Endothelial cell of umbilical vein (primary cell): ENCODE measurements at regions of chr1 and their contacts with region 1.

Region 1: GRCh38 chr1:231918239-231919015 is 291.8 kb downstream of the DISC1 start:
- DNase-seq: no peak
- H3K4me3 ChIP-seq: no peak overlapping the region
- H3K27ac ChIP-seq: peak overlapping the region; percentile 40
- H3K4me1 ChIP-seq: peaks cover 34% of the 10 kb centered on the region
- H3K27me3 ChIP-seq: no peaks in the 10 kb centered on the region
- CTCF ChIP-seq: no peak
- POLR2A ChIP-seq: no peak

Region 2: DNA sequence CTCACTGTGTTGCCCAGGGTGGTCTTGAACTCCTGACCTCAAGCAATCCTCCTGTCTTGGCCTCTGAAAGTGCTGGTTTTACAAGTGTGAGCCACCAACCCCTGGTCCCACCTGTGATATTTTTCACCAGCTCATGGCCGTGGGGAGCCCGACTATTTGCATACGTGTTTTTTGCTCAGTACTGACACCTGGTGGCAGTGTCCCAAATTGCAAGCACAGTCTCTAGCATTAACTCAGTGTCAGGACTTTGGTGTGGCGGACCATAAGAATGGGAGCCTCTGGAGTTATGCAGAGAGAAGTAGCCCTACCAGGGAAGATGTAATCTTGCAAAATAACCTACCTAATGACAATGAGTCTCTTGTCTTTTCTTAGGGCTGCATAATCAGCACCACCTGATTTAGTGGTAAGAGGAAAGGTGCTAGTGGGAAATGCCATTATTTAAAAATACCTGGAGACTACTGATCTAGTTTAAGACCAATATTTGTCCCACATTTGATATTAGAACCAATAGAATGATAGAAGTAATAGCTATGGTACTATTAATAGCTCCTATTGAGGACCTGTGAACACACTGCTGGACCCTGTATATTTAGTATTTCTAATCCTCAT is 13.5 kb after region 1 on chr1:
- CTCF ChIA-PET with region 1: interaction called, 6 read pairs
- POLR2A ChIA-PET with region 1: no interaction called
- dilution Hi-C with region 1: no loop called
- intact Hi-C with region 1: loop called (anchors 1 kb)
- DNase-seq: no peak
- H3K4me3 ChIP-seq: no peak overlapping the region
- H3K27ac ChIP-seq: no peak overlapping the region
- H3K4me1 ChIP-seq: peaks cover 20% of the 10 kb centered on the region
- H3K27me3 ChIP-seq: no peaks in the 10 kb centered on the region
- CTCF ChIP-seq: peak; percentile 42 to 53
- POLR2A ChIP-seq: no peak

Region 3: DNA sequence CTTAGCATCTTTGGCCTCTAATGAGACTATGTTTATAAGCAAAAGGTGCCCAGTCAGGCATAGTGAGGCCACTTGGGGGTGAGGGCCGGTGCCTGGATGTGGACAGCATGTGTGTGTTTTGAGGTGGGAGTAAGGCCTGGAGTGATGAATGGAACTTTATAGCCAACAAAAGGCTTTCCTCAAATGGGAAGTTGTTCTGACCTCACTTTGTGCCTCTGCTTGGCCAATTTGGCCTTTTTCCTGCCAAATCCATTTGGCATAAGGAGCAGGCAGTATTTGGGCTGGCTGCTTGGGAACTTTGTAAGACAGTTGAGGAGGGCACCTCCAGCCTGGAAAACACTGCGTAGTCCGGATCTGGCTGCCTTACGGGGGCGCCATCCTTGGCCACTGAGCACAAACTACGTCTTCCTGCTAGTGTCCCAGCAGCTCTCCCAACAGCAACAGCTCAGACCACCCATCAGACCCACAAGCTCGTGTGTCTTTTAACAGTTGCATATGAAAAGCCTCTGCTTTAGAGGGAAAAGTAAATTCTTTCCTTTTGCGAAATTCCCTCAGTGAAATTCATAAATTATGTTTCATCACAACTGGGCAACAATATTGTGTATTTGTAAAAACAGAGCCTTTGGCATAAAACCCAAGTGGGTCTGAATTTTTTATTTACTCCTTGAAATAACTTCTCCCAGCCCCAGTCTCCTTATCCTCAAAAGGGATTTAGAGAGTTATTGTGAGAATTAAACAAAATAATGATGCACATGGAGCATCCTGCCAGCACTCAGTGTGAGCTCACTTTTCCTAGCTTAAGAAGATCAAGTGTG is 31.1 kb after region 1 on chr1:
- CTCF ChIA-PET with region 1: no interaction called
- POLR2A ChIA-PET with region 1: no interaction called
- dilution Hi-C with region 1: no loop called
- intact Hi-C with region 1: loop called (anchors 1 kb)
- DNase-seq: no peak
- H3K4me3 ChIP-seq: no peak overlapping the region
- H3K27ac ChIP-seq: no peak overlapping the region
- H3K4me1 ChIP-seq: peaks cover 8% of the 10 kb centered on the region
- H3K27me3 ChIP-seq: no peaks in the 10 kb centered on the region
- CTCF ChIP-seq: no peak
- POLR2A ChIP-seq: no peak

Region 4: DNA sequence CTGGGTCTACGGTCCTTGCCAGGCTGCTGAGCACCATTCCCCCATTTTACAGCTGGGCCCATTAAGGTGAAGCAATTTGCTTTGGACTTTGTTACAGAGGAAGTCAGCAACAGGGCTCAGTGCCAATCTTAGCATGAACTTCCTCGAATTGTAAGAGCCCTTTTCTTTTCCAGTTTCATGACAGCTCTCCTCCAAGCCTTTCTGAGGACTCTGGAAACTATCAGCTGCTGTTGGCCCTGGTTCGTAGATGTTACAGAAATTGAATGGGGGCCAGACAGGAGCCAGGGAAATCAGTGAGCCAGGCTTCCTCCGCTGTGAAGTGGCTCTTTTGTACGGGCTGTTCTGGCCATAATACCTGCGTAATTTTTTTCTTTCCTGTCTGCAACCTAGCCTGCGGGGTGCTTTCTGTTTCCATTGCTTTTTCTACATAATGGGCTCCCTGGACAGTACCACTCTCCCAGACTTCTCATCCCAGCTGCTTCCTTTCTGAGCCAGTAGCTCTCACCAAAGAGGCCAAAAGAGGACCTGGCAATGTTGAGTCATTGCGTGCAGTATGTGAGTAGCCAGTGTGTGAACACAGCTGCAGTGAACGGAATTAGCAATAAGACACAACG is 94.5 kb after region 1 on chr1:
- CTCF ChIA-PET with region 1: no interaction called
- POLR2A ChIA-PET with region 1: no interaction called
- dilution Hi-C with region 1: no loop called
- intact Hi-C with region 1: loop called (anchors 1 kb)
- DNase-seq: peak; percentile 97
- H3K4me3 ChIP-seq: peak overlapping the region in 1 of 3 experiments; percentile 14
- H3K27ac ChIP-seq: peak overlapping the region; percentile 80
- H3K4me1 ChIP-seq: peaks cover 27% of the 10 kb centered on the region
- H3K27me3 ChIP-seq: no peaks in the 10 kb centered on the region
- CTCF ChIP-seq: no peak
- POLR2A ChIP-seq: no peak